ENCODE measurements at regions of chr4 and their contacts with region 1.

Region 1: DNA sequence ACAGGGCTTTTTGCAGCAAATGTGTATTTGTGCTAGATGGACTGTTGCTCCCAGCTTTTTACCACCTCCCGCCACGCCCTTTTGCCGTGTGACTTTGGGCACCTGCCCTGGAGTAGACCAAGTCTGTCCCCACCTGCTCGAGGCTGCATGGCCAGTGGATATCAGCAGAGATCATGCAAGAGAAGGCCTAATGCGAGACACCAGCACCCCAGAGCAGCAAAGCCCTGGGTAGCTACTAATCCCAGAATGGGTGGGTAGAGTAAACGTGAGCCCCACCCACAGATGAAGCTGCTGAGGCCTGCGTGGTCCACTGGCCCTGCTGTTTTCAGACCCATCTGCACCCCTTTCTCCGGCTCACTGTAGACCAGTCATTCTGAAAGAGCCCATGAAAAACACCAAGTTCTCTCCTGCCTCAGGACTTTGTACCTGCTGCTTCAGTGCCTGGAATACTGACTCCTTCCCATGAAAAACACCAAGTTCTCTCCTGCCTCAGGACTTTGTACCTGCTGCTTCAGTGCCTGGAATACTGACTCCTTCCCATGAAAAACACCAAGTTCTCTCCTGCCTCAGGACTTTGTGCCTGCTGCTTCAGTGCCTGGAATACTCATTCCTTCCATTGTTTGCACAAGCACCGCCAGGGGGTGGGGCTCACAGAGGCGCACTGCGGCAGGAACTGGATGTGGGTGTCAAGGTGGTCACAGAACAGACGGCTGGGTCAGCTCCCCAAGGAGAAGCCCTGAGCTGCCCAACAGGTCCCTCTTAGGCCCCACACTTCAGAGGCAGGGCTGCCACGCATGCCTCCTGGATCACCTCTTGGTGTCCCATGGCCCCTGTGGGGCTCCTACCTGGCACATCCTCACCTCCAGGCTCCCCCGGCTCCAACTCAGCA is 5.1 kb upstream of the TNIP2 start:
- DNase-seq: peak; percentile 59
- ATAC-seq: peak; percentile 9
- H3K4me3 Mint-ChIP-seq: no peak overlapping the region
- H3K27ac Mint-ChIP-seq: no peak overlapping the region
- H3K4me1 Mint-ChIP-seq: peaks cover 11% of the 10 kb centered on the region
- H3K27me3 Mint-ChIP-seq: no peaks in the 10 kb centered on the region

Region 2: DNA sequence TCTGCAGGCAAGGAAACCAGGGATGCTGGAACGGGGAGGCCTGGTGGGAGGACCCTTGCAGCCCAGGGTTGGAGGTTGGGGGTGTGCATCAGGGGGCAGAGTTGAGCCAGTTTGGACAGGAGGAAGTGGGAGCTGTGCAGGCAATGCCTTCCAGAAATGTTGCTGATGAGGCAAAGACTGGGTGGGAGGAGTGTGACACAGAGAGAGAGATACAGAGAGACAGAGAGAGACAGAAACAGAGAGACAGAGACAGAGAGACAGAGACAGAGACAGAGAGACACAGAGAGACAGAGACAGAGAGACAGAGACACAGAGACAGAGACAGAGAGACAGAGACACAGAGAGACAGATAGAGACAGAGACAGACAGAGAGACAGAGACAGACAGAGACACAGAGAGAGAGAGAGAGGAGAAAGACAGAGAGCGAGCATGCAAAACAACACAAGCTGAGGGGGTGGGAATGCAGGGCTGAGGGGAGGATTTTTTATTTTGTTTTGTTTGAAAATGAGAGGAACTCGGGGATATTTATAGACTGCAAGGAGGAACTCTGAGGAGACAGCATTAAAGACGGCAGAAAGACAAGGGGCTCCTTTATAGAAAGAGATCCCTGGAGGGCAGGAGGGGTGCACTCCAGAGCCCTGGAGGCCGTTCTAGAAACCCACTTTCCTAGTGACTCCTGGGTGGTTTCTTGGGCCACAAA is 517.4 kb before region 1 on chr4:
- CTCF ChIA-PET with region 1: no interaction called
- POLR2A ChIA-PET with region 1: no interaction called
- intact Hi-C with region 1: no loop called
- DNase-seq: peak; percentile 43
- ATAC-seq: no peak
- H3K4me3 Mint-ChIP-seq: no peak overlapping the region
- H3K27ac Mint-ChIP-seq: peak overlapping the region; percentile 40
- H3K4me1 Mint-ChIP-seq: peaks cover 38% of the 10 kb centered on the region
- H3K27me3 Mint-ChIP-seq: no peaks in the 10 kb centered on the region

Region 3: GRCh38 chr4:2798399-2799223 is 37.3 kb after region 1 on chr4:
- CTCF ChIA-PET with region 1: interaction called, 7 read pairs
- POLR2A ChIA-PET with region 1: no interaction called
- intact Hi-C with region 1: loop called (anchors 1 to 5 kb)
- DNase-seq: peak; percentile 78
- ATAC-seq: peak; percentile 67
- H3K4me3 Mint-ChIP-seq: peak overlapping the region; percentile 64
- H3K27ac Mint-ChIP-seq: peak overlapping the region; percentile 75
- H3K4me1 Mint-ChIP-seq: peaks cover 59% of the 10 kb centered on the region
- H3K27me3 Mint-ChIP-seq: no peaks in the 10 kb centered on the region

Region 4: DNA sequence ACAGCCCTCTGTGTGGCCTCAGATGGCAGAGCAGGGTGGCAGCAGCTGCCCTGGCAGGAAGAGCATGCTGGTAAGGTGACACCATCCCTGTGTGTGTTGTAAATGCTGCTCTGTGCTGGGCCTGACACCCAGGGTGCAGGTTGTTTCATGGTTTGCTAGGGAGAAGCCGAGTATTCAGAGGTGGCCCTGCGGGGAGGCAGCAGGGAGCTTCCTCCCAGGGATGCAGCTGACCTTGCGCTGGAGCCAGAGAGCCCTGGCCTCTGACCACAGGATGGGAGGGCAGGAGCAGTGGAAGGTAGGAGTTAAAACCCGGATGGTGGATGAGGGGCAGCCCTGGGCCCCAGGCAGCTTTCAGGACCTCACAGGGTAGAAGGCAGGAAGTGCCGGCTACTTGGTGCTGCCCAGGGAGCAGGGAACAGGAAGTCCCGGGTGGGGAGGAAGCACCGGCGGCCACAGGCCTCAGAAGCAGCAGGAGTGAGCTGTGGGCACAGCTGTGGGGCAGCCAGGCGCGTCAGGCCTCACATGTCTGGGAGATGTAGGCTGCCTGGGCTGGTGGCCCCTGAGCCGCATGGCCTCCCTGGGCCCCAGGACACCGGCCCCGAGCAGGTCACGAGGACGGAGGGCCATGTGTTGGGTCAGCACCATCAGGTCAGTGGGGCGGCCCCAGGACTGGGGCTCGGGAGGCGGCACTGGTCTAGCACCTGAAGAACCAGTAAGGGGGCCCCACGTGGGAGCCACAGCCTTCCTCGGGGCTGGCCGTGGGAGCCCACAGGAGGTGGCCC is 50.7 kb after region 1 on chr4:
- CTCF ChIA-PET with region 1: interaction called, 10 read pairs
- POLR2A ChIA-PET with region 1: interaction called, 3 read pairs
- intact Hi-C with region 1: loop called in 1 of 2 experiments (anchors 1 kb)
- DNase-seq: peak; percentile 78
- ATAC-seq: peak; percentile 83
- H3K4me3 Mint-ChIP-seq: peak overlapping the region; percentile 96
- H3K27ac Mint-ChIP-seq: peak overlapping the region; percentile 97
- H3K4me1 Mint-ChIP-seq: peaks cover 48% of the 10 kb centered on the region
- H3K27me3 Mint-ChIP-seq: no peaks in the 10 kb centered on the region

Region 5: GRCh38 chr4:2954358-2955185 is 193.3 kb after region 1 on chr4:
- CTCF ChIA-PET with region 1: interaction called, 9 read pairs
- POLR2A ChIA-PET with region 1: no interaction called
- intact Hi-C with region 1: loop called in 1 of 2 experiments (anchors 1 kb)
- DNase-seq: peak; percentile 88
- ATAC-seq: peak; percentile 83
- H3K4me3 Mint-ChIP-seq: peak overlapping the region; percentile 51
- H3K27ac Mint-ChIP-seq: peak overlapping the region; percentile 90
- H3K4me1 Mint-ChIP-seq: peaks cover 69% of the 10 kb centered on the region
- H3K27me3 Mint-ChIP-seq: no peaks in the 10 kb centered on the region

Region 6: GRCh38 chr4:3037957-3038461 is 276.7 kb after region 1 on chr4:
- CTCF ChIA-PET with region 1: no interaction called
- POLR2A ChIA-PET with region 1: no interaction called
- intact Hi-C with region 1: loop called in 1 of 2 experiments (anchors 1 kb)
- DNase-seq: peak; percentile 29
- ATAC-seq: peak; percentile 19
- H3K4me3 Mint-ChIP-seq: peak overlapping the region; percentile 34
- H3K27ac Mint-ChIP-seq: peak overlapping the region; percentile 11
- H3K4me1 Mint-ChIP-seq: peaks cover 36% of the 10 kb centered on the region
- H3K27me3 Mint-ChIP-seq: peaks cover 6% of the 10 kb centered on the region

Measured in activated CD4-positive, alpha-beta T cell treated with anti-CD3 and anti-CD28 coated beads for 36 hours (primary cell).